CD4-positive, alpha-beta memory T cell (primary cell): ENCODE measurements at regions of chr18 and their contacts with region 1.

Region 1: GRCh38 chr18:80034068-80034851 is at the start of gene RBFA:
- DNase-seq: peak; percentile 96 to 99 (median 98)
- H3K4me3 ChIP-seq: peak within 1 kb of the TSS; percentile 80 to 88
- H3K4me3 Mint-ChIP-seq: peak within 1 kb of the TSS; percentile 88 to 96 (median 92)
- H3K27ac ChIP-seq: peak within 1 kb of the TSS; percentile 80
- H3K27ac Mint-ChIP-seq: peak within 1 kb of the TSS; percentile 94 to 99 (median 97)
- H3K4me1 ChIP-seq: peaks cover 18% of the 10 kb centered on the region
- H3K4me1 Mint-ChIP-seq: peaks cover 15 to 38% (median 26%) of the 10 kb centered on the region in 4 donors
- H3K27me3 ChIP-seq: no peaks in the 10 kb centered on the region
- H3K27me3 Mint-ChIP-seq: no peaks in the 10 kb centered on the region
- total RNA-seq, gene RBFA: 14.5 to 14.9 TPM

Region 2: GRCh38 chr18:79523736-79524180 is 510.5 kb before region 1 on chr18:
- CTCF ChIA-PET with region 1: no interaction called
- POLR2A ChIA-PET with region 1: no interaction called
- intact Hi-C with region 1: loop called (anchors 5 kb)
- DNase-seq: peak; percentile 82 to 93 (median 84)
- H3K4me3 ChIP-seq: peak overlapping the region in 1 of 2 donors; percentile 68
- H3K4me3 Mint-ChIP-seq: peak overlapping the region; percentile 86 to 95 (median 92)
- H3K27ac ChIP-seq: peak overlapping the region; percentile 85
- H3K27ac Mint-ChIP-seq: peak overlapping the region; percentile 97 to 99 (median 99)
- H3K4me1 ChIP-seq: peaks cover 64% of the 10 kb centered on the region
- H3K4me1 Mint-ChIP-seq: peaks cover 40 to 84% (median 57%) of the 10 kb centered on the region in 4 donors
- H3K27me3 ChIP-seq: no peaks in the 10 kb centered on the region
- H3K27me3 Mint-ChIP-seq: no peaks in the 10 kb centered on the region

Region 3: DNA sequence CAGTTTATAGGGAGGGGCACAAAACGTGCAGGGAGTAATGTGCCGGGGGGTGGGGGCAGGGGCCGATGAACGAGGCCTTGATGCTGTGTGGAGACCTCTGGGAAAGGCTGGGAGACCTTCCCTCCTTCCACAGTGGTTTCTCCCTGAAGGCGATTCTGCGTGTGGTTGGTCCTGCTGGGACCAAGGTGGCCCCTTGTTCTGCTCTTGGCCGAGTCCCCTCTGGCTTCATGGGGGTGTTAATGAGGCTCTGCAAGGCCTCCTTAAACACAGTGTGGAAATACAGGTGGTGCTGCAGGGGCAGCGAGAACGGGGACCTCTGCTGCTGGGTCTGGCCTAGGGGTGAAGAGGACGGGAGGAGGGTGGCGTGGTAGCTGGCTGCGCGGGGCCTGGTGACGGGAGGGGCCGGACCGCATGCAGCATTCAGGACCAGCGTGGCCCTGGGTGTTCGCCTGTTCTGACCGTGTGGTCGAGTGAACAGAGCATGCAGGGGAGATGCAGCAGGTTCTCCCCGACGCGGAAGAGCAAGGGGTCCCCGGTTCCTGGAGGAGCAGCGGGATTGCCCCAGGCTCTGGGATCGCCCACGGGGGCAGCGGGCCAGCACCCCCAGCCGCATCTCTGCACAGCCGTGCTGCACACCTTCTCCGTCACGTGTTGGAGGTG is 278.6 kb before region 1 on chr18:
- CTCF ChIA-PET with region 1: no interaction called
- POLR2A ChIA-PET with region 1: no interaction called
- intact Hi-C with region 1: no loop called
- DNase-seq: no peak
- H3K4me3 ChIP-seq: no peak overlapping the region
- H3K4me3 Mint-ChIP-seq: no peak overlapping the region
- H3K27ac ChIP-seq: no peak overlapping the region
- H3K27ac Mint-ChIP-seq: no peak overlapping the region
- H3K4me1 ChIP-seq: no peaks in the 10 kb centered on the region
- H3K4me1 Mint-ChIP-seq: peaks cover 0 to 4% (median 2%) of the 10 kb centered on the region in 4 donors
- H3K27me3 ChIP-seq: no peaks in the 10 kb centered on the region
- H3K27me3 Mint-ChIP-seq: no peaks in the 10 kb centered on the region

Region 4: DNA sequence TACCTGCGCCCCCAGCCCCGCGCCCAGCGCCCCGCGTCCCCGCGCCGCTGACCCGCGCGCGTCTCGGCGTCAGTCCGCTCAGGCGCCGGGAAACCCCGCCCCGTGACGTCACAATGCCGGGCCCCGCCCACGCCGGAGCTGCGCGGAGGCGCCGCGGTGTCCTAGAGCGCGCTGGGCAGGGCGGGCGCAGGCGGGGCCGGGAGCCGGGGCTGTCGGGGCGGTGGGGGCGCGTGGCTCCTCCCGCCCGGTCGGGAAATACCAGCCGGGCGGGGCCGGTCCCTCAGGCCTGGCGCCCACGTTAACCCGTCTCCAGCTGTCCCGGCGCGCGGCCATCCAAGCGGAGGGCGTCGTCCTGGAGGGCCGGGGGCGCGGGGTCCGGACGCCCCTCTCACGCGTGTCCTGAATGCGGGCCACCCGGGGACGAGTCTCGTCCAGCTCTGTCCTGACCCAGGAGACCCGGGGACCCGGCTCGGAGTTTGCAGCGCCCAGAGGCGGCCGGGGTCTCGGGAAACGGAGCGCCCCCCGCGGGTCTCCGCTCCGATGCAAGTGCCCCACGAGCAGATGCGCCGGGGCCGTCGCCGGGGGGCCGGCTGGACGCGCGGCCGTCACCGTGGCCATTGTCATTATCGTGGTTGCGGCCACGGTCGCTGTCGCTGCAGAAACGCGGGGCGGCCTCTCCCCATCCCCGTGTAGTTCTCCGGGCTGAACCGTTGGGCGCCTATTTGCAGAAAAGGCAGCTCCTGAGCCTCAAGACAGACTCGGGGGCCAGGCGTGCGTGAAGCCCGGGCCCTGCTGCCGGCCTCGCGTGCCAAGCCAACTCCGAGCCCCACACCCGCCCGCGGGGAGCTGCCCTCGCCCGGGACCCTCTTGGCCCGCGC is 82.4 kb before region 1 on chr18 and contains the start of gene SLC66A2:
- CTCF ChIA-PET with region 1: no interaction called
- POLR2A ChIA-PET with region 1: interaction called, 19 read pairs
- intact Hi-C with region 1: loop called (anchors 1 kb)
- DNase-seq: peak; percentile 88 to 91 (median 88)
- H3K4me3 ChIP-seq: peak within 1 kb of the TSS; percentile 36 to 69
- H3K4me3 Mint-ChIP-seq: peak within 1 kb of the TSS; percentile 86 to 94 (median 88)
- H3K27ac ChIP-seq: peak within 1 kb of the TSS; percentile 64
- H3K27ac Mint-ChIP-seq: peak within 1 kb of the TSS; percentile 71 to 92 (median 87)
- H3K4me1 ChIP-seq: peaks cover 29% of the 10 kb centered on the region
- H3K4me1 Mint-ChIP-seq: peaks cover 8 to 38% (median 21%) of the 10 kb centered on the region in 4 donors
- H3K27me3 ChIP-seq: no peaks in the 10 kb centered on the region
- H3K27me3 Mint-ChIP-seq: no peaks in the 10 kb centered on the region
- total RNA-seq, gene SLC66A2: 26.0 to 26.4 TPM

Region 5: DNA sequence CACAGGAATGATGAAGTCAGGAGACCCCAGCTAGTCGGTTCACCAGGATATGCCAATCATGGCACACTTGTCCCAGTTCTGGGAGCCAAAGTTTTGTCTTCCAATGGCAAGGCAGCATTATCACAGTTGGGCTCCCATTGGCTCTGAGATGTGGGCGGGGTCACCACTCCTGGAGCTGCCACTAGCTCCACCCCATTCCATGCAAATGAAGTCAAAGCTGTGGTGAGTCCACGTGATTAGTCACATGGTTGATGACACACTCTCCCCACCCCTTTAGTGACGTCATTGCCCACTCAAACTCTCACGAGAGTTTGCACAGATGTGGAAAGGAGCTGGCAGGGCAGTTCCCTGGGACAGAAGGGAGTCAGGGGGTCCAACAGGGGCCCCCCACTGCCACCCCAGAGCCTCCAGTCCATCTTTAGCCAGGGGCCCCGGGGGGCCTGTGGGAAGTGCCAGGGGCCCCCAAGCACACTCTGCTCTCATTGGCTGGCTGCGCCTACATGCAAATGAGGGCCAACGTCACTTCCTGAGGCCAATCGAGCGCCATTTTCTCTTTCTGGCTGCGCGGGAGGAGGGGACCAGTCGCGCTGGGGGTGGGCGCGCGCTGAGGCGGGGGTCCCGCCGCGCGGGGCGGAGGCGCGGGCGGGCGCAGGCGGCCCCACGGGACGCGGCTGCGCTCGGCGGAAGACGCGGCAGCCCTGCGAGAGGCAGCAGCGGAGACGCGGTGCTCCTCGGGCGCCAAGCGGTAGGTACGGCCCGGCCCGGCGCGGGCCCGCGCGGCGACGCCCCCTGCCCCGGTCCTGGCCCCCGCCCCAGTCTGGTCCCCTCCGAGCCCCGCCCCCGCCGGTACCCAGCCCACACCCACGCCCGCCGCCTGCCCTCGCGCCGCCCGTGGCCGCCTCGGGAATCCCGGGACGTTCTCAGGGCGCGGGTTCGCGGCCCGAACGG is 74.7 kb after region 1 on chr18 and contains the start of gene ADNP2:
- CTCF ChIA-PET with region 1: interaction called, 3 read pairs
- POLR2A ChIA-PET with region 1: interaction called, 15 read pairs
- intact Hi-C with region 1: loop called (anchors 1 kb)
- DNase-seq: peak; percentile 90 to 95 (median 92)
- H3K4me3 ChIP-seq: peak within 1 kb of the TSS; percentile 55 to 67
- H3K4me3 Mint-ChIP-seq: peak within 1 kb of the TSS; percentile 83 to 88 (median 86)
- H3K27ac ChIP-seq: peak within 1 kb of the TSS; percentile 80
- H3K27ac Mint-ChIP-seq: peak within 1 kb of the TSS; percentile 96 to 97 (median 96)
- H3K4me1 ChIP-seq: peaks cover 32% of the 10 kb centered on the region
- H3K4me1 Mint-ChIP-seq: peaks cover 35 to 60% (median 45%) of the 10 kb centered on the region in 4 donors
- H3K27me3 ChIP-seq: no peaks in the 10 kb centered on the region
- H3K27me3 Mint-ChIP-seq: no peaks in the 10 kb centered on the region
- total RNA-seq, gene ADNP2: 20.2 to 20.9 TPM

Region 6: DNA sequence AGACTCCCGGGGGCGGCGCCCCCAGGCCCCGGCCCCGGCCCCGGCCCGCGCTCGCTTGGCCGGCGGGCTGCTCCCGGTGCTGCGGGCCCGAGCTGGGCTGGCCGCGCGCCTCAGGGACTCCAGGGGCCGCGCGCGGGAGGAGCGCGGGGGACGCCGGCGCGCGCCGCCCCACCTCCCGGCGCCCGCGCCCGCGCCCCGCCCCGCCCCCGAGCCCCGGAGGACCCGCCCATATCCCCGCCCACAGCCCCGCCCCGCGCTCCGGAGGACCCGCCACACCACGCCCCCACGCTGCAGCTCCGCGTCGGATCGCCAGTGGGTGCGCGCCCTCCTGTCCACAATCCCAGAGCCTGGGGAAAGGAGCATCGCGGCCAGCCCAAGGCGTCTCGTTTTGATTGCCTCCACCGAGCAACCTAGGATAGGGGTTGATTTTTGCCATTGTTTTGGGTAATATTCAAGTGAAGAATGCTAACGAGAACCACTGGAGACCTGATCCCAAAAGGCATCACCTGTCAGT is 213.2 kb after region 1 on chr18 and contains the start of gene PARD6G:
- CTCF ChIA-PET with region 1: no interaction called
- POLR2A ChIA-PET with region 1: no interaction called
- intact Hi-C with region 1: no loop called
- DNase-seq: peak in 3 of 5 donors; percentile 21 to 50 (median 38)
- H3K4me3 ChIP-seq: no peak within 1 kb of the TSS
- H3K4me3 Mint-ChIP-seq: peak within 1 kb of the TSS; percentile 27 to 76 (median 66)
- H3K27ac ChIP-seq: no peak within 1 kb of the TSS
- H3K27ac Mint-ChIP-seq: no peak within 1 kb of the TSS
- H3K4me1 ChIP-seq: no peaks in the 10 kb centered on the region
- H3K4me1 Mint-ChIP-seq: peaks cover 0 to 20% (median 5%) of the 10 kb centered on the region in 4 donors
- H3K27me3 ChIP-seq: peaks cover 4% of the 10 kb centered on the region
- H3K27me3 Mint-ChIP-seq: peaks cover 15 to 17% of the 10 kb centered on the region in 2 donors
- total RNA-seq, gene PARD6G: 0.28 to 1.3 TPM